AG04450 (cell line): ENCODE measurements at regions of chr9 and their contacts with region 1.

Region 1: GRCh38 chr9:114681594-114682332 is at the start of gene TEX48:
- DNase-seq: no peak
- H3K4me3 ChIP-seq: no peak within 1 kb of the TSS
- H3K27ac ChIP-seq: no peak within 1 kb of the TSS
- H3K27me3 ChIP-seq: no peaks in the 10 kb centered on the region
- CTCF ChIP-seq: peak; percentile 79
- polyA plus RNA-seq, gene TEX48: not detected in 2 replicates

Region 2: GRCh38 chr9:114494776-114495569 is 186.8 kb before region 1 on chr9:
- CTCF ChIA-PET with region 1: no interaction called
- POLR2A ChIA-PET with region 1: no interaction called
- DNase-seq: no peak
- H3K4me3 ChIP-seq: no peak overlapping the region
- H3K27ac ChIP-seq: no peak overlapping the region
- H3K27me3 ChIP-seq: peaks cover 31% of the 10 kb centered on the region
- CTCF ChIP-seq: no peak

Region 3: GRCh38 chr9:114516913-114517312 is 164.8 kb before region 1 on chr9:
- CTCF ChIA-PET with region 1: no interaction called
- POLR2A ChIA-PET with region 1: no interaction called
- DNase-seq: no peak
- H3K4me3 ChIP-seq: no peak overlapping the region
- H3K27ac ChIP-seq: no peak overlapping the region
- H3K27me3 ChIP-seq: peaks cover 14% of the 10 kb centered on the region
- CTCF ChIP-seq: no peak

Region 4: DNA sequence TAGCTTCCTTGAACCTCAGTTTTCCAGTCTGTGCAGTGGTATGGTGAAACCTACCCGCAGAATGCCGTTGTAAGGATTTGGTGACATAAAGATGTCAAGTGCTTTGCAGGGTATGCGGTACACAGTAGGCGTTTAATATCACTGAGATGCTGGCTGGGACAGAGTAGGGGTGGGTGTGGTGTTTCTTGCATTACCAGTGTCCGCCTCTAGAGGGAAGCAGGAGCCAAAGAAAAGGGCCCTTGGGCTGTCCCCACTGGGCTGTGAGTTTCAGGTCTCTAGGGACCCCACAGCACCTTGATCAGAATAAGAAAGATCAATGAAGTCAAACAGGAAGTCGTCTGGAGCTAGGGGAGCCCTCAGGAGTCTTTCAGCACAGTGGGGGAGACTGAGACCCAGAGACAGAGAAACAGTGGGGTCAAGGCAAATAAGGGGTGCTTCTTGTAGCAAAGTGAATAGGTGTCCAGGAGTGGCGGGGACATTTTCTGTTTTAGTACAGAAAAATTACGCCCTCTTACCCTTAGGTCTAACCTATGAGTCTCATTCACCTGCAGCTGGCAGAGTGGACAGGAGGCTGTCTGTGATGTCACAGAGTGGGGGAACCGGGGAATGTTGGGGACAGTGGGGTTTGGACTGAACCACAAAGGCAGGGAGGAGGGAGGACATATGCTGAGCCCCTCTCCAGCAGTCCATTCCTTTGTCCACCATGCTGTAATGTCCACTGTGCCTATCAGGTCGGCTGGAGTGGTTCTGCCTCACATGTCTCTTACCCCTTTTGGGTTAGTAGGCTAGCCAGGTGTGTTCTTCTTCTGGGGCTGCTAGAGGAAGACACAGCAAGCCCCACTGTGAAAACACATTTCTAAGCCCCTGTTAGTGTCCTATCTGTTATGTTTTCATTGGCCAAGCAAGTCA is 19.4 kb before region 1 on chr9:
- CTCF ChIA-PET with region 1: interaction called, 11 read pairs
- POLR2A ChIA-PET with region 1: no interaction called
- DNase-seq: no peak
- H3K4me3 ChIP-seq: no peak overlapping the region
- H3K27ac ChIP-seq: no peak overlapping the region
- H3K27me3 ChIP-seq: peaks cover 17% of the 10 kb centered on the region
- CTCF ChIP-seq: peak; percentile 93

Region 5: GRCh38 chr9:114738581-114739316 is 57.0 kb after region 1 on chr9:
- CTCF ChIA-PET with region 1: interaction called, 28 read pairs
- POLR2A ChIA-PET with region 1: no interaction called
- DNase-seq: peak; percentile 78
- H3K4me3 ChIP-seq: no peak overlapping the region
- H3K27ac ChIP-seq: no peak overlapping the region
- H3K27me3 ChIP-seq: no peaks in the 10 kb centered on the region
- CTCF ChIP-seq: peak; percentile 92

Region 6: DNA sequence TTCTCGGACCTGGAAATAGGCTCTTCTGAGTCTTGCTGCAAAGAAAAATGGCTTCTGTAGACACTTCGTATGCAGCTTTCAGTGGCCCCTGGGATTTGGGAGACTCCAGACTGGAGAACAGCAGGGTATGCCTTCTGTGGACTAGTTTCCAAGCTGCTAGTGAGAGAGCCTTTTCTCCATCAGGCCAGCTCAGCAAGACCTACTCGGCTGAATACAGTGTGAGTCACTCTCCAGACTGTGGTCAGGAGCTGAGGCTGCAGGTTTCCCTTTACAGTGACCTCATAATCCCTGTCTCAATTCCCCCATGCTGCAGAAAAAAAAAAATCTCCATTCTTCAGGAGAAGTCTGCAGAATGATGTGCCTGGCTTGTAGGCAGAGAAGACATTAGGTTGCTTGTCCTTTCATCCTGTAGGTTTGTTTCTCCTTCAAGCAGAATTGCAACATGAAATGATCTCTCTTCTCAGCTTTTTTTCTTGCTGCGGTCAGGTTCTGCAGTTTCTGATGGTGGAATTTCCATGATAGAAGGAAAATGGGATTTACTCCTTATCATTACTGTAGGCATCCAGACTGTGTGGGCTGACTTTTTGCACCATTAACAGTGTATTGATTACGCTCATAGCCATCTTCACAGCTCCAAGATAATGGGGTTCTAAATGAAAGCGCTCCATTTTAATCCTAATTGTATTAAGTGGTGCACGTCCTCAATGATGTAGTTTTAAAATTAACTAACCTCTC is 326.9 kb after region 1 on chr9:
- CTCF ChIA-PET with region 1: interaction called, 14 read pairs
- POLR2A ChIA-PET with region 1: no interaction called
- DNase-seq: peak; percentile 69
- H3K4me3 ChIP-seq: no peak overlapping the region
- H3K27ac ChIP-seq: no peak overlapping the region
- H3K27me3 ChIP-seq: no peaks in the 10 kb centered on the region
- CTCF ChIP-seq: no peak